Naive thymus-derived CD4-positive, alpha-beta T cell (primary cell): ENCODE measurements at regions of chr1 and their contacts with region 1.

Region 1: GRCh38 chr1:225428068-225428880 is 436 bp upstream of the LBR start:
- DNase-seq: peak; percentile 81 to 94 (median 91)
- ATAC-seq: peak; percentile 95
- H3K4me3 ChIP-seq: peak overlapping the region; percentile 71
- H3K4me3 Mint-ChIP-seq: peak overlapping the region; percentile 88 to 99 (median 91)
- H3K27ac ChIP-seq: peak overlapping the region; percentile 78
- H3K27ac Mint-ChIP-seq: peak overlapping the region; percentile 71 to 97 (median 90)
- H3K4me1 ChIP-seq: peaks cover 31% of the 10 kb centered on the region in 2 donors
- H3K4me1 Mint-ChIP-seq: peaks cover 41 to 52% (median 46%) of the 10 kb centered on the region in 7 donors
- H3K27me3 ChIP-seq: no peaks in the 10 kb centered on the region
- H3K27me3 Mint-ChIP-seq: no peaks in the 10 kb centered on the region

Region 2: DNA sequence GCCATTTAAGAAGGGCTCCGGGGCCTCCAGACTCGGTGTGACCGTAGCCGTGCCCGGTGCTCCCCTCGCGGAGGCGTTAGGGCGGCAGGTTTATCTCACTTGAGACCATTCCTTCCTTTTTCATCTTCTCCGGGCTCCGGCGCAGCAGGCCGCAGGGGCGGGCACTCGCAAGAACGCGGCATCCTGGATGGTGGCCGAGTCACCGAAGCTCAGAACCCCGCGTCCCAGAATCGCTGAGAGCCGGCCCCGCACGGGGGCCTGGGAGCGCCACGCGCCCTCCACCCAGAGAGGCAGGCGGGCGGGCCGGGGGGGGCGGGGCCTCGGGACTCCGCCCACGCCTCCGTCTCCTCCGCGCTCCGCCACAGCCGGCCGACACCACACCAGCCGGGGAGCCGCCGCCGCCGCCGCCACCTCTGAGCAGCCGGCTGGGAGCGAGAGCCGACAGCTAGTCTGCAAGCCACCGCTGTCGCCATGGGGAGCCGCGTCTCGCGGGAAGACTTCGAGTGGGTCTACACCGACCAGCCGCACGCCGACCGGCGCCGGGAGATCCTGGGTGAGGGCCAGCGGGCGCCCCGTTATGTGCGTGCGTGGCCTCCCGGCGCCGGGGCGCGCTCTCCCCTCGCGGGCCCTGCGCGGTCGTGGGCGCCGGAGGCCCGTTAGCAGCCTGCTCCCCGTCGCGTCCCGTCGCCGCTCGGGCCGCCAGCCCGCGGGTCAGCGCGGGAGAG is 1245.2 kb before region 1 on chr1 and contains the start of gene DEGS1:
- CTCF ChIA-PET with region 1: no interaction called
- POLR2A ChIA-PET with region 1: no interaction called
- intact Hi-C with region 1: loop called in 1 of 2 experiments (anchors 10 kb)
- DNase-seq: peak; percentile 77 to 86 (median 84)
- ATAC-seq: peak; percentile 91
- H3K4me3 ChIP-seq: peak within 1 kb of the TSS; percentile 76
- H3K4me3 Mint-ChIP-seq: peak within 1 kb of the TSS; percentile 78 to 95 (median 90)
- H3K27ac ChIP-seq: peak within 1 kb of the TSS; percentile 92
- H3K27ac Mint-ChIP-seq: peak within 1 kb of the TSS; percentile 90 to 96 (median 93)
- H3K4me1 ChIP-seq: peaks cover 20 to 28% of the 10 kb centered on the region in 2 donors
- H3K4me1 Mint-ChIP-seq: peaks cover 35 to 56% (median 53%) of the 10 kb centered on the region in 7 donors
- H3K27me3 ChIP-seq: no peaks in the 10 kb centered on the region
- H3K27me3 Mint-ChIP-seq: no peaks in the 10 kb centered on the region
- total RNA-seq, gene DEGS1: 35.4 to 86.0 (median 38.3) TPM

Region 3: DNA sequence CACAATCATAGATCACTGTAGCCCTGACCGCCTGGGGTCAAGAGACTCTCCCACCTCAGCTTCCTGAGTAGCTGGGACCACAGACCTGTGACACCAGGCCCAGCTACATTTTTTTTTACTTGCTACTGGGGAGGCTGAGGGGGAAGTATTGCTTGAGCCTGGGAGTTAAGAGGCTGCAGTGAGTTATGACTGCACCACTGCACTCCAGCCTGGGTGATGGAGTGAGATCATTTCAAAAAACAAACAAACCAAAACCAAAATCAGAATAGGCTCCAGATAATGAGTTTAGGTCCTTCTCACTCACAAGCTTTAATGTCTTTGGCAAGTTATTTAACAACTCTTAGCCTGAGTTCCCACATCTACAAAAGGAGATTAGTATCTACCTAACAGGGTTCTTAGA is 1016.5 kb before region 1 on chr1:
- CTCF ChIA-PET with region 1: no interaction called
- POLR2A ChIA-PET with region 1: no interaction called
- intact Hi-C with region 1: no loop called
- DNase-seq: no peak
- ATAC-seq: peak; percentile 37
- H3K4me3 ChIP-seq: no peak overlapping the region
- H3K4me3 Mint-ChIP-seq: no peak overlapping the region
- H3K27ac ChIP-seq: no peak overlapping the region
- H3K27ac Mint-ChIP-seq: peak overlapping the region in 7 of 9 donors; percentile 15 to 72 (median 38)
- H3K4me1 ChIP-seq: no peaks in the 10 kb centered on the region
- H3K4me1 Mint-ChIP-seq: peaks cover 7 to 35% (median 15%) of the 10 kb centered on the region in 7 donors
- H3K27me3 ChIP-seq: no peaks in the 10 kb centered on the region
- H3K27me3 Mint-ChIP-seq: no peaks in the 10 kb centered on the region

Region 4: DNA sequence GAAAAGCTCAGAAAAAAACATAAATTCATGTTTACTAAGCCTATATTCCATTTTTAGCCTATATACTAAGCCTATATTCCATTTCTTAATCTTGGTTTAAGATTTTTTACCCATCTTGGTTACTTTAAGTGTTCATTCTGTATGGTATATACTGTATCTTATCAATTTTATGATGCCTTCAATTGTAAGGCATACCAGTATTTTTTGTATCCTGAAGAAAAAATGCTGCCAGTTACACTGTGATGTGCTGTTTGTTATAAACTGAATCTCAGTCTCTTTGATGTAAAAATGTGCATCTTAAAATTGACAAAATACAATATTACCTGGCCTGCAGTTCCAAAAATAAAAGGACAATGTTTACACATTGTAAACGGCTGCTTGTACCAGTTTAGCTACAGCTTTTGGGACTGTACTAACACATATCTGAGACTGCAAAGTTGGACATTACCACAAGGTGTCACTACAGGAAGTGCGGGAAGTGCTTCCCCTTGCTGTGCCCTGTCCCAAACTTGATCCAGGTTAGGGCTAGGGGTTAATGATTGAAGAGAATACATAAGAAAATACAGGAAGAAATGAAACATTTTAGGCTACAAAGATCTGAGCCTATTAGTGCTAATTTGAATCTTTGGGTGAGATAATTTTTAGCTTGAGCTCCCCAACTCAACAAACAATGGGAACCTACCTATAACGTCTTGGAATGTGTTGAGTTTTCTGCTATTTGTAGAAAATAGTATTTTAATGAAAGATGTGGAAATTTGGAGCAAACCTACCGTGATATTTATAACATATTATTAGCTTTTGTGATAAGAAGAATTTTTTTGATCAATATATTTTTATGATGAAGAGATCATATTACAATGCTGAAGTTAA is 109.3 kb before region 1 on chr1:
- CTCF ChIA-PET with region 1: no interaction called
- POLR2A ChIA-PET with region 1: no interaction called
- intact Hi-C with region 1: loop called in 1 of 2 experiments (anchors 5 kb)
- DNase-seq: peak in 5 of 9 donors; percentile 2 to 28 (median 12)
- ATAC-seq: peak; percentile 65
- H3K4me3 ChIP-seq: no peak overlapping the region
- H3K4me3 Mint-ChIP-seq: no peak overlapping the region
- H3K27ac ChIP-seq: no peak overlapping the region
- H3K27ac Mint-ChIP-seq: no peak overlapping the region
- H3K4me1 ChIP-seq: no peaks in the 10 kb centered on the region
- H3K4me1 Mint-ChIP-seq: peaks cover 0 to 4% (median 0%) of the 10 kb centered on the region in 7 donors
- H3K27me3 ChIP-seq: no peaks in the 10 kb centered on the region
- H3K27me3 Mint-ChIP-seq: peaks cover 0 to 10% (median 5%) of the 10 kb centered on the region in 5 donors

Region 5: DNA sequence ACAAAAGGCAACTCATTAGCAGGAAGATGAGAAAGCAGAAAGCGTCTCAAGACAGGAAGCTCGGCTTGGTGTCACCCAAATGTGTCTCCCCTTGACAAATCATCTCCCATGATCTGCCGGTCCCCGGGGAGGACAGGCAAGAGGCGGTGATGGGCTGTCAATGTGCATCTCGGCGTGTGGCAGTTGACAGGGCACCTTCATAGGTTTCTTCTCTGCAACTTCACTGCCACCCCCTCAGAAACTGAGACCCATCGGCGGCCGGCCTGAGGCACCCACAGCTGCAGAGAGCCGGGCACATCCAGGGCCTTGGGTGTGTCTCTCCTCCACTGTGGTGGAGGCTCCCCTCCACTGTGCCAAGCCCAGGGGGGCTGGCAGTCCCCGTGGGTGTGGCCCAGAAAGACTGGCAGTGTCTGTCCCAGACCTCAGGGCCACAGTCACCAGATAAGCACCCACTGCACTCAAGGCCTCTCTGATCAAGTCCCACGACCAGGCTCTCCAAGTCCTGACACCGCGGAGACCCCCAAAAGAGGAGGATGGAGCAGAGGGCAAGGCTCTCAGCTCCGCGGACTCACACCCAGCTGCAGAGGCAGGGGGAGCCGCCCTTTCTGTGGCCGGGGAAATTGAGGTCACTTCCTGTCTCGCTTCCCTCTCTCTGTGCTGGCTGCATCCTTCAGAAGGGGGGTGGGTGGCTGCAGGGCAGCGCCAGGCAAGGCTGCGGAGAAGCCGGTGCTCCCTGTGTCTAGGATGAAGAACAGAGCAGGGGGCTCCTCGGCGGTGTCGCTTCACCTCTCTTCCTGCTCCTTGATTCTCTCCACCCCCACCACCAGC is 39.1 kb after region 1 on chr1:
- CTCF ChIA-PET with region 1: interaction called, 5 read pairs
- POLR2A ChIA-PET with region 1: interaction called, 87 read pairs
- intact Hi-C with region 1: loop called (anchors 1 kb)
- DNase-seq: peak; percentile 57 to 85 (median 81)
- ATAC-seq: peak; percentile 91
- H3K4me3 ChIP-seq: peak overlapping the region; percentile 94
- H3K4me3 Mint-ChIP-seq: peak overlapping the region; percentile 81 to 94 (median 92)
- H3K27ac ChIP-seq: peak overlapping the region; percentile 85
- H3K27ac Mint-ChIP-seq: peak overlapping the region; percentile 89 to 98 (median 98)
- H3K4me1 ChIP-seq: peaks cover 22 to 40% of the 10 kb centered on the region in 2 donors
- H3K4me1 Mint-ChIP-seq: peaks cover 33 to 65% (median 48%) of the 10 kb centered on the region in 7 donors
- H3K27me3 ChIP-seq: no peaks in the 10 kb centered on the region
- H3K27me3 Mint-ChIP-seq: no peaks in the 10 kb centered on the region

Region 6: GRCh38 chr1:225508538-225509375 is 80.5 kb after region 1 on chr1:
- CTCF ChIA-PET with region 1: no interaction called
- POLR2A ChIA-PET with region 1: no interaction called
- intact Hi-C with region 1: no loop called
- DNase-seq: no peak
- ATAC-seq: no peak
- H3K4me3 ChIP-seq: no peak overlapping the region
- H3K4me3 Mint-ChIP-seq: no peak overlapping the region
- H3K27ac ChIP-seq: no peak overlapping the region
- H3K27ac Mint-ChIP-seq: no peak overlapping the region
- H3K4me1 ChIP-seq: no peaks in the 10 kb centered on the region
- H3K4me1 Mint-ChIP-seq: no peaks in the 10 kb centered on the region
- H3K27me3 ChIP-seq: no peaks in the 10 kb centered on the region
- H3K27me3 Mint-ChIP-seq: peaks cover 4 to 28% (median 5%) of the 10 kb centered on the region in 5 donors

Region 7: DNA sequence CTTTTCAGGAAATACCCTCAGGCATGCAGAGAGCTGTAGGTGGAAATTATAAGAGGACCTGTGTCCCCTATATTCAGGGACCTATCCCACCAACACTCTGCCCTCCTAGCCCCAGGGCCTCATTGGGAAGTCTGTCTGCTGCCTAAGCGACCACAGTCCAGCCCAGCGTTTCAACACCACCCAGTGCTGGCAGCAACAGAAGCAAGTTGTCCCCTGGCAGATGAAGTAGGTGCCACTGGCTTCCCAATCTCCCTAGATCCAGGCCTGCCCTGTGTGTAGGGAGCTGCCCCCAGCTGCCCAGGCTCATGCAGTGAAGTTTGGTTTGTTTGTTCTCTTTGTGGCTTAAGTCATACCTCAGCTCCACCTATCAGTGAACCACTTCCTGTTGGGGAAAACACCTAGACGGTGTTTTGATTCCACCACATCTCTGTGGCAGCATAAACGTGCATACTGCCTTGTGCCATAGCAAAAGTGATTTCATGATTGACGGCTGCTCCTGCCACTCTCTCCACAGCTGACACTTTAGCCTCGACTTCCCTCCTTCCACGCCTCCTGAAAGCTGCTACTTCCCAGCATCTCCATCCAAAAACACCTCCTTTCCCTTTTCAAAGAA is 468.8 kb after region 1 on chr1:
- CTCF ChIA-PET with region 1: no interaction called
- POLR2A ChIA-PET with region 1: no interaction called
- intact Hi-C with region 1: loop called in 1 of 2 experiments (anchors 1 kb)
- DNase-seq: peak in 8 of 9 donors; percentile 70 to 92 (median 88)
- ATAC-seq: peak; percentile 97
- H3K4me3 ChIP-seq: peak overlapping the region; percentile 50
- H3K4me3 Mint-ChIP-seq: peak overlapping the region; percentile 74 to 89 (median 84)
- H3K27ac ChIP-seq: peak overlapping the region; percentile 85
- H3K27ac Mint-ChIP-seq: peak overlapping the region; percentile 89 to 100 (median 97)
- H3K4me1 ChIP-seq: peaks cover 35 to 45% of the 10 kb centered on the region in 2 donors
- H3K4me1 Mint-ChIP-seq: peaks cover 36 to 67% (median 54%) of the 10 kb centered on the region in 7 donors
- H3K27me3 ChIP-seq: no peaks in the 10 kb centered on the region
- H3K27me3 Mint-ChIP-seq: peaks cover 0 to 47% (median 0%) of the 10 kb centered on the region in 5 donors

Region 8: GRCh38 chr1:226109829-226110248 is 681.6 kb after region 1 on chr1:
- CTCF ChIA-PET with region 1: no interaction called
- POLR2A ChIA-PET with region 1: no interaction called
- intact Hi-C with region 1: loop called in 1 of 2 experiments (anchors 5 kb)
- DNase-seq: peak; percentile 44 to 84 (median 59)
- ATAC-seq: peak; percentile 92
- H3K4me3 ChIP-seq: peak overlapping the region; percentile 59
- H3K4me3 Mint-ChIP-seq: peak overlapping the region; percentile 88 to 96 (median 92)
- H3K27ac ChIP-seq: peak overlapping the region; percentile 67
- H3K27ac Mint-ChIP-seq: peak overlapping the region; percentile 85 to 93 (median 89)
- H3K4me1 ChIP-seq: no peaks in the 10 kb centered on the region
- H3K4me1 Mint-ChIP-seq: peaks cover 7 to 26% (median 21%) of the 10 kb centered on the region in 7 donors
- H3K27me3 ChIP-seq: no peaks in the 10 kb centered on the region
- H3K27me3 Mint-ChIP-seq: peaks cover 0 to 6% (median 0%) of the 10 kb centered on the region in 5 donors

Region 9: DNA sequence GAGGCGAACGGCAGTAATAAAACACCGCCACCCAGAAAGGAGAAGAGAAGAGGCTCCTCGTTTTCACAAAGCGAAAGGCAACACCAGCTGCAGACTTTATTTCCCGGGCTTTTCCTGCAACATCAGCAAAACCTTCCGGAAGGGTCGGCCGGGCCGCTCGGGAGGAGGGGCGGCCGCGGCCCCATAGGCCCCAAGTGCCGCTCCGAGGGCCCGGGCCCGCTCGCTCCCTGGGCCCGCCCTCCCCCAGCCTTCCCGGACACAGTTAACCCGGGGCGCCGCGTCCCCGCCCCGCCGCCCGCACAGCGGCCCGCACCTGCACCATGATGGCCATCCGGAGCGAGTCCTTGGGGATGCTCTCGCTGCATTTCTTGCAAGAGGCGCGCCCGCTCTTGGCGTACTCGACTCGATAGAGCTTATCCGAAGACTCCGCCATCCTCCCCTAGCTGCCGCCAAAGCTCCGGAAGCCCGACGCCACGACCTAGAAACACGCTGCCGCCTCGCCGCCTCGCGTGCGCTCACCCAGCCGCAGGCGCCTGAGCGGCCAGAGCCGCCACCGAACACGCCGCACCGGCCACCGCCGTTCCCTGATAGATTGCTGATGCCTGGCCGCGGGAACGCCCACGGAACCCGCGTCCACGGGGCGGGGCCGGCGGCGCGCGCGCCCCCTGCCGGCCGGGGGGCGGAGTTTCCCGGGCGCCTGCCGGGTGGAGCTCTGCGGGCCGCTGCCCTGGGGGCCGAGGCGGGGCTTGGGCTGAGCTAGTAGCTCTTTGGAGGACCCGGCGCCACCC is 979.4 kb after region 1 on chr1 and contains the start of gene PARP1:
- CTCF ChIA-PET with region 1: no interaction called
- POLR2A ChIA-PET with region 1: no interaction called
- intact Hi-C with region 1: loop called in 1 of 2 experiments (anchors 2 kb)
- DNase-seq: peak; percentile 83 to 93 (median 89)
- ATAC-seq: peak; percentile 94
- H3K4me3 ChIP-seq: peak within 1 kb of the TSS; percentile 82
- H3K4me3 Mint-ChIP-seq: peak within 1 kb of the TSS; percentile 89 to 99 (median 94)
- H3K27ac ChIP-seq: peak within 1 kb of the TSS; percentile 74
- H3K27ac Mint-ChIP-seq: peak within 1 kb of the TSS; percentile 68 to 96 (median 93)
- H3K4me1 ChIP-seq: peaks cover 23 to 30% of the 10 kb centered on the region in 2 donors
- H3K4me1 Mint-ChIP-seq: peaks cover 37 to 46% (median 40%) of the 10 kb centered on the region in 7 donors
- H3K27me3 ChIP-seq: no peaks in the 10 kb centered on the region
- H3K27me3 Mint-ChIP-seq: peaks cover 0 to 3% (median 0%) of the 10 kb centered on the region in 5 donors
- total RNA-seq, gene PARP1: 63.6 to 165 (median 89.3) TPM